Sciatic nerve (tissue), 2 donors: ENCODE measurements at regions of chr10 and their contacts with region 1.

Region 1: GRCh38 chr10:68861253-68861652 is 33.9 kb downstream of the STOX1 start:
- DNase-seq: no peak
- ATAC-seq: no peak

Region 2: GRCh38 chr10:68696023-68696422 is 165.2 kb before region 1 on chr10:
- intact Hi-C with region 1: no loop called
- DNase-seq: no peak
- ATAC-seq: no peak

Region 3: GRCh38 chr10:68796605-68797004 is 64.6 kb before region 1 on chr10:
- intact Hi-C with region 1: no loop called
- DNase-seq: no peak
- ATAC-seq: no peak

Region 4: GRCh38 chr10:69988094-69988493 is 1126.8 kb after region 1 on chr10:
- intact Hi-C with region 1: loop called (anchors 10 kb)
- DNase-seq: no peak
- ATAC-seq: no peak